ENCODE measurements at regions of chr12 and their contacts with region 1.

Region 1: DNA sequence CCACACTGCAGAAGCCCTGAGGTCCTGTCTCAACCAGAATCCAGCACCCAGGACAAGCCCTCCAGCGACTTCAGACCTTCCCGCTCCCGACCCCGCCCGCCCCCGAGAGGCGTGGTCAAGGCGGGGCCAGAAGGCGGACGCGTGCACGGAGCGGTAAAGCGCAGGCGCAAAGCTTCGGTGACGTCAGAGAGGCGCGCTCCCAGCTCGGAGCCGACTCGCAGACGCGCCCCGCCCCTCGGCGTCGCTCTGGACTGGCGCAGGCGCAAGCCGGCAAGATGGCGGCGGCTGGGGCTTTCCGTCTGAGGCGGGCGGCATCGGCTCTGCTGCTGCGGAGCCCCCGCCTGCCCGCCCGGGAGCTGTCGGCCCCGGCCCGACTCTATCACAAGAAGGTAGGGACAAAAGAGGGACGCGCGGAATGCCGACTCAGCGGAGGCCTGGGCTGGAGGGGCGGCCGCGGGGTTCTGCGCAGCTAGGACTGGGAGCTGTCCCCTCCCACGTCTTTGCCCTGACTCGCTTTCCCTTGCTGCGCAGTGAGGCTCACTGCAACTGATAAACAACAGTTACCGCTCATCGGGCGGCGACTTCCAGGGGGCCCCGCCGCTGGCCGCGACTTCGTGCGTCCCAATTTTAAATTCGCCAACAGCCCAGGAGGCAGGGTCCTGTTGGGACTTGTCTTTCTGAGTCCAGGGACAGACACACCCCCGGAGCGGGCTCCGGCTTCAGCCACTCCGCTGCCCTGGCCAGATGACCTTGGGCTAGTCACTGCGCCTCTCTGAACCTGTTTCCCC is at the start of gene ISCU:
- DNase-seq: peak; percentile 93
- ATAC-seq: peak; percentile 83
- H3K4me3 ChIP-seq: peak within 1 kb of the TSS; percentile 96 to 100 (median 99)
- H3K27ac ChIP-seq: peak within 1 kb of the TSS; percentile 97
- H3K4me1 ChIP-seq: peaks cover 30% of the 10 kb centered on the region
- H3K27me3 ChIP-seq: no peaks in the 10 kb centered on the region; a peak in 1 of 5 replicates
- CTCF ChIP-seq: no peak; the same call in 1 of the 2 replicates
- EP300 ChIP-seq: no peak
- POLR2A ChIP-seq: peak; percentile 63 to 78
- RAD21 ChIP-seq: peak; percentile 31; the same call in 1 of the 2 replicates
- total RNA-seq, gene ISCU: 107 and 131 TPM in 2 replicates

Region 2: GRCh38 chr12:108618079-108618952 is 55.8 kb after region 1 on chr12:
- CTCF ChIA-PET with region 1: interaction called, 45 read pairs
- POLR2A ChIA-PET with region 1: interaction called, 13 read pairs
- in situ Hi-C with region 1: loop called (anchors 5 kb)
- intact Hi-C with region 1: loop called (anchors 1 kb)
- DNase-seq: peak; percentile 55
- ATAC-seq: peak; percentile 88
- H3K4me3 ChIP-seq: no peak overlapping the region
- H3K27ac ChIP-seq: no peak overlapping the region
- H3K4me1 ChIP-seq: peaks cover 20% of the 10 kb centered on the region
- H3K27me3 ChIP-seq: peaks cover 0 to 4% of the 10 kb centered on the region in 2 experiments; a peak in 1 of 5 replicates
- CTCF ChIP-seq: peak; percentile 89
- EP300 ChIP-seq: no peak
- POLR2A ChIP-seq: no peak
- RAD21 ChIP-seq: peak; percentile 90

Region 3: DNA sequence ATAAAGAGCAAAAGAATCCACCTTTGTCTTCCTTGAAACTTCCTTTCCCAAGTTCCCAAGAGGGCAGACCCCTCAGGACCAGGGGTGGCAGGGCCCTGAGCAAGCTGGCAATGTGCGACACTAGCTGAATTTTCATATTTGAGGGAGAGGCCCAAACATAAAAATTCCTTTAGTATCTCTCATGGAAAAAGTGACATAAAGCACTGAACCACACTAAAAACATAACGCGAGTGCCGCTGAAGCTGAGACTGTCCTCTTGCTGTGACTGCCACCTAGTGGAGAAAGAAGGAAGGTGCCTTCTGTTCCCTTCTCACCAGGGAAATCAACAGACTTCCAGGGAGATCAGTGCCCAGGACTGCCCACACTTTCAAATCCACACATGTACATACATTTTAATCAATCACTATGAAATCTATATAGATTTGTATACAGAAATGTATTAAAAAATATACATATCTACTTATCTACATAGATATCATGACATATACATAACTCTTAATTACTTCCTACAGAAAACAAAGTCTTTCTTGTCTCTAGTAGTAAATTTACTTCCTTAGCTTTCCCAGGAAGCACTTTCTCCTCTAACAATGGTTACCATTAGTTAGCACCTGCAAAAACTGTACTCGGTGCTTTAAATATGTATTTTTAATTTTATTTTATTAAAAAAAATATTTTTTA is 241.0 kb after region 1 on chr12:
- CTCF ChIA-PET with region 1: interaction called, 11 read pairs
- POLR2A ChIA-PET with region 1: no interaction called
- in situ Hi-C with region 1: loop called (anchors 10 kb)
- intact Hi-C with region 1: loop called (anchors 1 kb)
- DNase-seq: peak; percentile 75
- ATAC-seq: peak; percentile 89
- H3K4me3 ChIP-seq: no peak overlapping the region
- H3K27ac ChIP-seq: peak overlapping the region; percentile 25
- H3K4me1 ChIP-seq: peaks cover 6% of the 10 kb centered on the region; the same call in 1 of the 2 replicates
- H3K27me3 ChIP-seq: no peaks in the 10 kb centered on the region
- CTCF ChIP-seq: peak; percentile 94
- EP300 ChIP-seq: no peak
- POLR2A ChIP-seq: no peak
- RAD21 ChIP-seq: peak; percentile 91

Region 4: DNA sequence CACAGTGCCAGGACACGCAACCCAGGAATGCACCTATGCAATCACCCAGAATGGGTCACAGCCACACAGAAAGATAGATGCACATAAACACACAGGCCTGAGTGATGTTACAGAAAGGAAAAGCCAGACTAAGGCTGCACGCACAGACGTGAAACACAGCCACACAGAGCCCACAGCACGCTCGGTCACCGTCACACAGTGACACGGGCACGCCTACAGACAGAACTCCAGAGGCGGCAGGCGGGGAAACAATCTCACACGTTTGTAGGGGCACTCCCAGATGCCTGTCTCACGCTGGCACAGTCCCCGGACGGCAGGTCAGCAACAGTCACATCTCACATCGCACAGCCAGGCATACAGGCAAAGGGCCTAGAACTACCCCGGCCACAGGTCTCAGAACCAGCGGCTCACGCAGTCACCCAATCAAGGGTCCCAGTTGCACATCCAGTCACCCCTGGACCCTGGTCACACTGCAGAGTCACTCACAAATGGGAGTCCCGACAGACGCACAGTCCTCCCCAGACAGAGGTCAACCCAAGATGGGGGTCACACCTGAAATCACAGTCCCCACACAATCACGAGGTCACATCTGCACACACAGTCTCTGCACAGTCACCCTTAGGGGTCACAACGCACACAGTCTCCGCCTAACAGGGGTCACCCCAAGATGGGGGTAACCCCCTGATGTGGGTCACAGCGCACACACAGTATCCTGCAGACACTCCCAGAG is 294.1 kb after region 1 on chr12:
- CTCF ChIA-PET with region 1: no interaction called
- POLR2A ChIA-PET with region 1: no interaction called
- in situ Hi-C with region 1: no loop called
- intact Hi-C with region 1: loop called (anchors 5 kb)
- DNase-seq: peak; percentile 25
- ATAC-seq: peak; percentile 72
- H3K4me3 ChIP-seq: peak overlapping the region; percentile 57 to 89 (median 70)
- H3K27ac ChIP-seq: peak overlapping the region; percentile 52
- H3K4me1 ChIP-seq: peaks cover 32% of the 10 kb centered on the region
- H3K27me3 ChIP-seq: peaks cover 4 to 6% of the 10 kb centered on the region in 2 experiments; a peak in 1 of 5 replicates
- CTCF ChIP-seq: peak; percentile 14; the same call in 1 of the 2 replicates
- EP300 ChIP-seq: no peak
- POLR2A ChIP-seq: peak; percentile 26 to 52; a peak in 2 of 4 replicates
- RAD21 ChIP-seq: no peak

Region 5: GRCh38 chr12:109727039-109727723 is 1164.6 kb after region 1 on chr12:
- CTCF ChIA-PET with region 1: no interaction called
- POLR2A ChIA-PET with region 1: no interaction called
- in situ Hi-C with region 1: no loop called
- intact Hi-C with region 1: no loop called
- DNase-seq: peak; percentile 89
- ATAC-seq: peak; percentile 91
- H3K4me3 ChIP-seq: peak overlapping the region in 1 of 3 experiments; percentile 12; a peak in 2 of 6 replicates
- H3K27ac ChIP-seq: peak overlapping the region; percentile 83
- H3K4me1 ChIP-seq: peaks cover 70% of the 10 kb centered on the region
- H3K27me3 ChIP-seq: no peaks in the 10 kb centered on the region
- CTCF ChIP-seq: 0 out of 2 replicates have a peak, but pooled peaks have one; percentile 22
- EP300 ChIP-seq: peak; percentile 60 to 72; a peak in 2 of 4 replicates
- POLR2A ChIP-seq: peak; percentile 27 to 57; a peak in 2 of 4 replicates
- RAD21 ChIP-seq: peak; percentile 33; the same call in 1 of the 2 replicates

Measured in HepG2 (cell line).